ENCODE measurements at regions of chr6 and their contacts with region 1.

Region 1: DNA sequence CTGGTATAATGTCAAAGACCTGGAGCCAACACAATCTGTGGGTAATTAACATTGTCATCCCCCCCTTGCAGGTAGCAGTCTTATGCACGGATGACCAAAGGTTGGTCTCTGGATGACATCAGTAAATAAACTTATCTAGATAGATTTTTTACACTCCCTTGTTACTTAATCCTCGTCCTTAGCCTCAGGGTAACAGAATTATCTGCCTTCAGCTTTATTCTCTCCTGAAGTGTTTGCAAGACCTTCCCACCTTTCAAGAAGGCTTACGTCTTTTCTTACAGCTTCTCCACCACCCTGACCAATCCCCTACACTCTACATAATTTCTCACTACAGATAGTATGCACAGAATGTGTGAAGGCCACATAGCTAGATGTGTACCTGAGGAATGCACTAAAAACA is 434.8 kb upstream of the HTR1E start:
- DNase-seq: peak; percentile 73 to 78
- H3K4me3 ChIP-seq: no peak overlapping the region
- H3K4me3 Mint-ChIP-seq: no peak overlapping the region
- H3K27ac Mint-ChIP-seq: peak overlapping the region; percentile 76
- H3K4me1 ChIP-seq: peaks cover 52% of the 10 kb centered on the region
- H3K4me1 Mint-ChIP-seq: peaks cover 29% of the 10 kb centered on the region
- H3K27me3 ChIP-seq: no peaks in the 10 kb centered on the region
- H3K27me3 Mint-ChIP-seq: no peaks in the 10 kb centered on the region
- CTCF ChIP-seq: no peak

Region 2: DNA sequence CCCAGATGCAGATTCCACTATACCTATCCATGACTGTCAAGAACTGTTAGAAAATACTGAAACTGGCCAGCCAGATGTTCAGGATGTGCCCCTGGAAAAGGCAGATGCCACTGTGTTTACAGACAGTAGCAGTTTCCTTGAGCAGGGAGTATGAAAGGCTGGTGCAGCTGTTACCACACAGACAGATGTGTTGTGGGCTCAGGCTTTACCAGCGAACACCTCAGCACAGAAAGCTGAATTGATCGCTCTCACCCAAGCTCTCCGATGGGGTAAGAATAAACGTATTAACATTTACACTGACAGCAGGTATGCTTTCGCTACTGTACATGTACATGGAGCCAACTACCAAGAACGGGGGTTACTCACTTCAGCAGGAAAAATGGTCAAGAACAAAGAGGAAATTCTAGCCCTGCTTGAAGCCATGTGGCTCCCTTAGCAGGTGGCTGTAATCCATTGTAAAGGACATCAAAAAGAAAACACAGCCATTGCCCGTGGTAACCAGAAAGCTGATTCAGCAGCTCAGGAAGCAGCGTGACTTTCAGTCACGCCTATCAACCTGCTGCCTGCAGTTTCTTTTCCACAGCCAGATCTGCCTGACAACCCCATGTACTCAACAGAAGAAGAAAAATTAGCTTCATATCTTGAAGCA is 24.9 kb before region 1 on chr6:
- CTCF ChIA-PET with region 1: no interaction called
- POLR2A ChIA-PET with region 1: no interaction called
- intact Hi-C with region 1: loop called (anchors 1 kb)
- DNase-seq: no peak
- H3K4me3 ChIP-seq: no peak overlapping the region
- H3K4me3 Mint-ChIP-seq: no peak overlapping the region
- H3K27ac Mint-ChIP-seq: no peak overlapping the region
- H3K4me1 ChIP-seq: peaks cover 5% of the 10 kb centered on the region
- H3K4me1 Mint-ChIP-seq: peaks cover 7% of the 10 kb centered on the region
- H3K27me3 ChIP-seq: no peaks in the 10 kb centered on the region
- H3K27me3 Mint-ChIP-seq: no peaks in the 10 kb centered on the region
- CTCF ChIP-seq: no peak

Region 3: DNA sequence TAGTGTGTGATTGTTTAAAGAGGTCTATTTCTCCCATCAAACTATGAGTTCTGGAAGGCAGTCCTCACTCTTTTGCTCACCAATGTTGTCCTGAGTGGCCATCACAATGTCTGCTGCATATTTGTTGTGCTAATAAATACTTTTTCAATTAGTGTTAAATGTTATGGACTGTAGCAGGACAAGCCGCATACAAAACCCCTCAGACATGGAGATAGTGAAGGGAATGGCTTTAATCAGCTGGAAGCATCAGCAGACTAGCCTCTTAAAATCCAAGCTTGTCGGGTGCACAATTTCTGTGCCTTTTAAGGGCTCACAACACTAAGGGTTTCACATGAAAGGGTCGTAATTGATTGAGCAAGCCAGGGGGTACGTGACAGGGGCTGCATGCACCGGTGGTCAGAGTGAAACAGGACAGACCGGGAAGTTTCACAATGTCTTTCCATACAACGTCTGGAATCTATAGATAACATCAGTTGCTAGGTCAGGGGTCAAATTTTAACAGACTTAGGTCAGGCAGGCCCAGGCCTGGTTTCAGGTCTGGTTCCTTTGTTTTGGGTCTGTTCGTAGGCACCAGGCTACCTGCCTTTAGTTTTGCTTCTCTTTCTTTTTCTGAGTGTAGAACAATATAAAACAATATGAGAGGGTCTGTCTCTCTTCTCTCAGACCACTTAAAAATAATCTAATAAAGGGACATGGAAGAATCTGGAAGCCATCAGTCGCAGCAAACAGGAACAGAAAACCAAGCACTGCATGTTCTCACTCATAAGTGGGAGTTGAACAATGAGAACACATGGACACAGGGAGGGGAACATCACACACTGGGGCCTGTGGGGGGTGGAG is 107.3 kb after region 1 on chr6:
- CTCF ChIA-PET with region 1: no interaction called
- POLR2A ChIA-PET with region 1: no interaction called
- intact Hi-C with region 1: loop called (anchors 1 kb)
- DNase-seq: peak; percentile 58 to 67
- H3K4me3 ChIP-seq: no peak overlapping the region
- H3K4me3 Mint-ChIP-seq: no peak overlapping the region
- H3K27ac Mint-ChIP-seq: peak overlapping the region; percentile 54
- H3K4me1 ChIP-seq: peaks cover 7% of the 10 kb centered on the region
- H3K4me1 Mint-ChIP-seq: peaks cover 13% of the 10 kb centered on the region
- H3K27me3 ChIP-seq: no peaks in the 10 kb centered on the region
- H3K27me3 Mint-ChIP-seq: no peaks in the 10 kb centered on the region
- CTCF ChIP-seq: no peak

Region 4: GRCh38 chr6:86715676-86716075 is 213.2 kb after region 1 on chr6:
- CTCF ChIA-PET with region 1: no interaction called
- POLR2A ChIA-PET with region 1: no interaction called
- intact Hi-C with region 1: loop called (anchors 1 kb)
- DNase-seq: peak; percentile 74 to 75
- H3K4me3 ChIP-seq: no peak overlapping the region
- H3K4me3 Mint-ChIP-seq: no peak overlapping the region
- H3K27ac Mint-ChIP-seq: peak overlapping the region; percentile 92
- H3K4me1 ChIP-seq: peaks cover 19% of the 10 kb centered on the region
- H3K4me1 Mint-ChIP-seq: peaks cover 24% of the 10 kb centered on the region
- H3K27me3 ChIP-seq: no peaks in the 10 kb centered on the region
- H3K27me3 Mint-ChIP-seq: no peaks in the 10 kb centered on the region
- CTCF ChIP-seq: no peak

Region 5: DNA sequence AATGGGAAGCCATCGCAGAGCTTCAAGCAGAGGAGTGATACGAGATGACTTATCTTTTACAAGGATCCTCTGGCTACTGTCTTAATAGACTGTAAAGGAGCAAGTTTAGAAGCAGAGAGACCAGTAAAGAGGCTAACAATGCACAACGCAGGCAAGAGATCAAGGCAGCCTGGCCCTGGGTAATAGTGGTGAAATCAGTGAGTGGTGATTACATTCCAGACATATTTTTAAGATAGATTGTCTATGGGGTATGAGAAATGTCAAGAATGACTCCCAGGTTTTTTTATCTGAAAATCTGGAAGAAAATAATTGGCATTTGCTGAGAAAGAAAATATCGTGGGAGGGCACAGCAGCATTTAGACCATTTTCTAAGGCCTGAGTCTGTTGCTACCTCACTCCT is 221.2 kb after region 1 on chr6:
- CTCF ChIA-PET with region 1: no interaction called
- POLR2A ChIA-PET with region 1: no interaction called
- intact Hi-C with region 1: loop called (anchors 1 kb)
- DNase-seq: peak; percentile 55 to 67
- H3K4me3 ChIP-seq: no peak overlapping the region
- H3K4me3 Mint-ChIP-seq: peak overlapping the region; percentile 25
- H3K27ac Mint-ChIP-seq: peak overlapping the region; percentile 82
- H3K4me1 ChIP-seq: peaks cover 36% of the 10 kb centered on the region
- H3K4me1 Mint-ChIP-seq: peaks cover 16% of the 10 kb centered on the region
- H3K27me3 ChIP-seq: no peaks in the 10 kb centered on the region
- H3K27me3 Mint-ChIP-seq: no peaks in the 10 kb centered on the region
- CTCF ChIP-seq: no peak

Measured in Caco-2 (cell line).